IMR-90 (cell line): ENCODE measurements at regions of chr5 and their contacts with region 1.

Region 1: GRCh38 chr5:156815988-156816599 is 34.0 kb upstream of the PPP1R2B start:
- DNase-seq: peak; percentile 42
- ATAC-seq: peak; percentile 86
- H3K4me3 ChIP-seq: no peak overlapping the region
- H3K27ac ChIP-seq: no peak overlapping the region
- H3K4me1 ChIP-seq: no peaks in the 10 kb centered on the region; the same call in 1 of the 2 replicates
- H3K27me3 ChIP-seq: no peaks in the 10 kb centered on the region
- CTCF ChIP-seq: peak; percentile 65
- POLR2A ChIP-seq: no peak
- RAD21 ChIP-seq: peak; percentile 80

Region 2: DNA sequence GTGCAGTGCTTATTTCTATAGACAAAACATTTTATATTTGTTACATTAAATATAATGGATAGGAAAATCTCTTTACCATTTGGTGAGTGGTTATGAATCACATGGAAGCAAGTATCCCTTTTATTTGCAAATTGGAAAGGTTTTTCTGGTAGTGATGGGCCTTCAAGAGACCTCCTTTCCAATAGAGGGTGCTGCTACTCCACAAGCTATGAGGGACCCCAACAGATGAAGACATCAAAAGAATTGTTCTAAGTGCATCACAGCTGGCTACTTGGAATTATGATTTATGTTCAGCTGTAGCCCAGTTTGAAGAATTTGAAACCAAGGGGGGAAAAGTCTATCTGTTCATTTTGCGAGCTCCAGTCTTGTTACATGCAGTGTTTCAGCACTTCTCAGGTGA is 982.8 kb before region 1 on chr5:
- CTCF ChIA-PET with region 1: no interaction called
- POLR2A ChIA-PET with region 1: no interaction called
- dilution Hi-C with region 1: no loop called
- in situ Hi-C with region 1: no loop called
- intact Hi-C with region 1: loop called (anchors 5 kb)
- DNase-seq: peak; percentile 1
- ATAC-seq: no peak
- H3K4me3 ChIP-seq: no peak overlapping the region
- H3K27ac ChIP-seq: no peak overlapping the region
- H3K4me1 ChIP-seq: no peaks in the 10 kb centered on the region
- H3K27me3 ChIP-seq: no peaks in the 10 kb centered on the region
- CTCF ChIP-seq: peak; percentile 34; the same call in 1 of the 2 replicates
- POLR2A ChIP-seq: no peak
- RAD21 ChIP-seq: peak; percentile 38

Region 3: GRCh38 chr5:156120777-156121176 is 695.3 kb before region 1 on chr5:
- CTCF ChIA-PET with region 1: no interaction called
- POLR2A ChIA-PET with region 1: no interaction called
- dilution Hi-C with region 1: no loop called
- in situ Hi-C with region 1: no loop called
- intact Hi-C with region 1: loop called (anchors 5 kb)
- DNase-seq: no peak
- ATAC-seq: peak; percentile 50
- H3K4me3 ChIP-seq: no peak overlapping the region
- H3K27ac ChIP-seq: peak overlapping the region; percentile 72
- H3K4me1 ChIP-seq: peaks cover 6% of the 10 kb centered on the region
- H3K27me3 ChIP-seq: no peaks in the 10 kb centered on the region
- CTCF ChIP-seq: no peak
- POLR2A ChIP-seq: no peak
- RAD21 ChIP-seq: no peak

Region 4: GRCh38 chr5:156178117-156178516 is 638.0 kb before region 1 on chr5:
- CTCF ChIA-PET with region 1: no interaction called
- POLR2A ChIA-PET with region 1: no interaction called
- dilution Hi-C with region 1: no loop called
- in situ Hi-C with region 1: no loop called
- intact Hi-C with region 1: loop called (anchors 10 kb)
- DNase-seq: peak; percentile 23
- ATAC-seq: no peak
- H3K4me3 ChIP-seq: no peak overlapping the region
- H3K27ac ChIP-seq: no peak overlapping the region
- H3K4me1 ChIP-seq: no peaks in the 10 kb centered on the region
- H3K27me3 ChIP-seq: no peaks in the 10 kb centered on the region
- CTCF ChIP-seq: no peak
- POLR2A ChIP-seq: no peak
- RAD21 ChIP-seq: no peak

Region 5: GRCh38 chr5:156359476-156359875 is 456.6 kb before region 1 on chr5:
- CTCF ChIA-PET with region 1: no interaction called
- POLR2A ChIA-PET with region 1: no interaction called
- dilution Hi-C with region 1: no loop called
- in situ Hi-C with region 1: no loop called
- intact Hi-C with region 1: loop called (anchors 10 kb)
- DNase-seq: peak; percentile 96
- ATAC-seq: peak; percentile 91
- H3K4me3 ChIP-seq: no peak overlapping the region
- H3K27ac ChIP-seq: peak overlapping the region; percentile 95; the same call in 1 of the 2 replicates
- H3K4me1 ChIP-seq: peaks cover 17% of the 10 kb centered on the region
- H3K27me3 ChIP-seq: no peaks in the 10 kb centered on the region
- CTCF ChIP-seq: no peak
- POLR2A ChIP-seq: no peak
- RAD21 ChIP-seq: peak; percentile 22; the same call in 1 of the 2 replicates

Region 6: GRCh38 chr5:156475182-156476157 is 340.6 kb before region 1 on chr5:
- CTCF ChIA-PET with region 1: no interaction called
- POLR2A ChIA-PET with region 1: no interaction called
- dilution Hi-C with region 1: no loop called
- in situ Hi-C with region 1: no loop called
- intact Hi-C with region 1: loop called (anchors 10 kb)
- DNase-seq: peak; percentile 98
- ATAC-seq: peak; percentile 91
- H3K4me3 ChIP-seq: no peak overlapping the region
- H3K27ac ChIP-seq: peak overlapping the region; percentile 89; the same call in 1 of the 2 replicates
- H3K4me1 ChIP-seq: peaks cover 14% of the 10 kb centered on the region
- H3K27me3 ChIP-seq: no peaks in the 10 kb centered on the region
- CTCF ChIP-seq: peak; percentile 44
- POLR2A ChIP-seq: no peak
- RAD21 ChIP-seq: peak; percentile 48

Region 7: GRCh38 chr5:156640691-156641241 is 175.3 kb before region 1 on chr5:
- CTCF ChIA-PET with region 1: no interaction called
- POLR2A ChIA-PET with region 1: no interaction called
- dilution Hi-C with region 1: no loop called
- in situ Hi-C with region 1: no loop called
- intact Hi-C with region 1: no loop called
- DNase-seq: peak; percentile 44
- ATAC-seq: peak; percentile 48
- H3K4me3 ChIP-seq: no peak overlapping the region
- H3K27ac ChIP-seq: no peak overlapping the region; the same call in 1 of the 2 replicates
- H3K4me1 ChIP-seq: peaks cover 5% of the 10 kb centered on the region
- H3K27me3 ChIP-seq: no peaks in the 10 kb centered on the region
- CTCF ChIP-seq: no peak
- POLR2A ChIP-seq: no peak
- RAD21 ChIP-seq: no peak

Region 8: GRCh38 chr5:156698323-156698722 is 117.8 kb before region 1 on chr5:
- CTCF ChIA-PET with region 1: no interaction called
- POLR2A ChIA-PET with region 1: no interaction called
- dilution Hi-C with region 1: no loop called
- in situ Hi-C with region 1: no loop called
- intact Hi-C with region 1: no loop called
- DNase-seq: no peak
- ATAC-seq: no peak
- H3K4me3 ChIP-seq: no peak overlapping the region
- H3K27ac ChIP-seq: no peak overlapping the region
- H3K4me1 ChIP-seq: no peaks in the 10 kb centered on the region
- H3K27me3 ChIP-seq: no peaks in the 10 kb centered on the region
- CTCF ChIP-seq: no peak
- POLR2A ChIP-seq: no peak
- RAD21 ChIP-seq: no peak

Region 9: GRCh38 chr5:156922207-156922792 is 106.2 kb after region 1 on chr5:
- CTCF ChIA-PET with region 1: no interaction called
- POLR2A ChIA-PET with region 1: no interaction called
- dilution Hi-C with region 1: no loop called
- in situ Hi-C with region 1: no loop called
- intact Hi-C with region 1: no loop called
- DNase-seq: no peak
- ATAC-seq: no peak
- H3K4me3 ChIP-seq: no peak overlapping the region
- H3K27ac ChIP-seq: no peak overlapping the region
- H3K4me1 ChIP-seq: no peaks in the 10 kb centered on the region
- H3K27me3 ChIP-seq: no peaks in the 10 kb centered on the region
- CTCF ChIP-seq: no peak
- POLR2A ChIP-seq: no peak
- RAD21 ChIP-seq: no peak

Region 10: DNA sequence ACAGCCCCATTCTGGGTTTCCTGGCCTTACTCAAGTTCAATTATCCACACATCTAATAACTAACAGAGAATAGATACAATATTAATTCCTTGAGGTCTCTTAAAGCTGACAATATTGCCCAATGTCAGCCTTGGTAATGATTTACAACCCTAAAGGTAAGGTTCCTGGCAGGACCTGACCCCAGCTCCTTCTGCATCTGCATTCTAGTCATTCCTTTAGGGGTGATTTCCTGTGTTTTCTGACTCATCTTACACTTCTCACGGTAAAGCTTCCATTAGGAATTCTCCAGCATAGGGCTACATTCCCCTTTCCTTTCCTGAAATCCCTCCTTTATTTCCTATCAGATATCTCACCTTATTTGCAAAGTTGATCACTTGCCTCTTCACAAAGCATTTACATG is 233.5 kb after region 1 on chr5:
- CTCF ChIA-PET with region 1: no interaction called
- POLR2A ChIA-PET with region 1: no interaction called
- dilution Hi-C with region 1: no loop called
- in situ Hi-C with region 1: no loop called
- intact Hi-C with region 1: no loop called
- DNase-seq: no peak
- ATAC-seq: no peak
- H3K4me3 ChIP-seq: no peak overlapping the region
- H3K27ac ChIP-seq: no peak overlapping the region
- H3K4me1 ChIP-seq: no peaks in the 10 kb centered on the region
- H3K27me3 ChIP-seq: no peaks in the 10 kb centered on the region
- CTCF ChIP-seq: no peak
- POLR2A ChIP-seq: no peak
- RAD21 ChIP-seq: no peak